Activated CD4-positive, alpha-beta memory T cell treated with anti-CD3 and anti-CD28 coated beads for 36 hours (primary cell): ENCODE measurements at regions of chr7 and their contacts with region 1.

Region 1: DNA sequence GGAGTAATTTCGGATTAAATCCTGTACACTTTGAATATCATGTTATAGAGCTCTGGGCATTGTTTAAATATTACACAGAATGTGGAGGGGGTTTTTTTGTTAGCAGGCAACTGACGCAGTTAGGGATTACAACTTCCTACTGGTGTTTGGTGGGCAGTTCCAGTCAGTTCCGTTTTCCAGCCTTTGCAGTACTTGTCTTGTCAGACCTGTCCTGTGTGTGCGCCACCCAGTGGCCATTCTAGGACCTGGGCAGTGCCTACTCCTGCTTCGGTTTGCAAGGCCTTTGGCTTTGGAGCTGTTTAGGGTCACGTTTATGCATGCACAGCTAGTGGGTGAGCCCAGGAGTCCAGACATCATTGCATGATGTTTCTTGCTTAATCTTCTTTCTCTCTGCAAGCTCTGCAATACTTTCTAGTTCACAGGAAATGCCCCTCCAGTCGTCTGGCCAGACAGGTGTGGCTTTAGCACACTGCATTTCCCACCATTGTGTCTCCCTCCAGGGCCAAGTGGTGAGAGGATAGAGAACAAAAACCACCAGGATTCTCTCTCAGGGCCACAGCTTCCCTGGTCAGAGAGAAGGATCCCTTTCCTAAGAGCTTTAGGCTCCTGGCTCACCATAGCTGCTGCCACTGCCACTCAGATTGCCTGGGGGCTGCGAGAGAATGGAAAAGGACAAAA is 96.5 kb upstream of the TARP start:
- DNase-seq: peak; percentile 84
- H3K4me3 Mint-ChIP-seq: no peak overlapping the region
- H3K27ac Mint-ChIP-seq: peak overlapping the region; percentile 29
- H3K4me1 Mint-ChIP-seq: peaks cover 56% of the 10 kb centered on the region
- H3K27me3 Mint-ChIP-seq: no peaks in the 10 kb centered on the region

Region 2: DNA sequence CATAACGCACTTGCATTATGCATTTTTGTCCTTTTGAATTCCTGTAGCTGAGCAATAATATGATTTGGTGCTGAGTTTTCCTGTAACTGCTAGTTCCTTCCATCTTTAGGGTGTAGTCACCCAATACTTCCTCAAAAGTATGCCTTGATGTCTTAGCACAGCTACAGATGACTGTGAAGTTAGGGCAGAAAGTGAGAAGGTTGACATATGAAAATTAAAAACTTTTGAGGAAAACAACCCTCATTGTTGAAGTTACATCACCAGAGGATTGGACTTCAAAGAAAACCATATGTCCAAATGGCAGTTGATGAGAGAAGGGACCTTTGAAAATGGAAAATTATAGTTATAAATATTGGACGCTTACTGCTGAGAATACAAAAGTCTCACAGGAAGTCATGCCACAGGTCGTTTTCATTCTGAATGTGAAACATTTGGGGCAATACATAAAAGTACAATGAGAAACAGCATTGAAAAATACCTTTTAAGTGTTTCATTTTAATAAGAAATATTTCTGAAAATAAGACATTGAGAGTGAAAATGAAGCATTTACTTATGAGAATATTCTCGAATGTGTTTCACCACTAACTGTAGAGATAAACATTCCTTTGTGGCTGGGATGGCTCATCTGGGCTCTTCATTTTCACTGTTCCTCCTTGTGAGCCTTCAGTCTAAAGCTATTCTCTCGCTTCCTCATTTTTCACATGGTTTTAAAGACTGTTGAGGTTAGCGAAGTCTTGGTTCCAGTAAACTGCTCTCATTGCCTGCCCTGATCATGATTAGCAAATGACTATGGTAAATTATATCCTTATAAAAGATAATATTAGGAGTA is 583.0 kb before region 1 on chr7:
- CTCF ChIA-PET with region 1: no interaction called
- POLR2A ChIA-PET with region 1: no interaction called
- intact Hi-C with region 1: loop called (anchors 10 kb)
- DNase-seq: no peak
- H3K4me3 Mint-ChIP-seq: no peak overlapping the region
- H3K27ac Mint-ChIP-seq: no peak overlapping the region
- H3K4me1 Mint-ChIP-seq: peaks cover 1% of the 10 kb centered on the region
- H3K27me3 Mint-ChIP-seq: peaks cover 7% of the 10 kb centered on the region

Region 3: GRCh38 chr7:38107486-38107893 is 262.5 kb before region 1 on chr7:
- CTCF ChIA-PET with region 1: interaction called, 78 read pairs
- POLR2A ChIA-PET with region 1: no interaction called
- intact Hi-C with region 1: loop called (anchors 1 kb)
- DNase-seq: peak; percentile 73
- H3K4me3 Mint-ChIP-seq: no peak overlapping the region
- H3K27ac Mint-ChIP-seq: no peak overlapping the region
- H3K4me1 Mint-ChIP-seq: no peaks in the 10 kb centered on the region
- H3K27me3 Mint-ChIP-seq: peaks cover 13% of the 10 kb centered on the region

Region 4: DNA sequence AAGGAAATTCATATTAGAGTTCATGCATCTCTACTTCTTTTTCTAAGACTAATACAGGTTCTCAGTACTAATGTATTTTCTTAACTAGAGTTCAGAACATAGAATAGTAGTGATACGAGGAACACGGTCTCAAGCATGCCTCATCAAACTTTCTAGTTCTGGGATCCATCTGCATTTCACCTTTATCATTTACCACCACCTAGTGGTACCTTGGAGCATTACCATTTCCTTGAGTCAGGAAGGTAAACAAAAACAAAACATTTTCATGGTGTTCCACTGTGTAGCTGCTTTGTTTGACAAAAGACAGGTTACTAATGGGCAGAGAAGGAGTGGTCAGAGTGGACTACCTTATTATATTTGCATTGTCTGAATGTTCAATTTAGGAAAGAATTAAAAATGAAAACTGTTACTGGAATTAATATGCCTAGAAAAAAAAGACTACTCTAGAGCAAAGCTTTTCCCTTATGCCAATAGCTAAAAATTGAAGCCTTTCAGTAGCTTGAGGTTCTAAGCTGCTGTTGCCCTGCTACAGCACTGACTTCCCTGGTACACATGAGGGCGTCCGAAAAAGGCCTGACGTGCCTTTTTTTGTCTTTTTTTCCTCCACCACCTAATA is 147.4 kb before region 1 on chr7:
- CTCF ChIA-PET with region 1: interaction called, 233 read pairs
- POLR2A ChIA-PET with region 1: no interaction called
- intact Hi-C with region 1: no loop called
- DNase-seq: no peak
- H3K4me3 Mint-ChIP-seq: no peak overlapping the region
- H3K27ac Mint-ChIP-seq: peak overlapping the region; percentile 31
- H3K4me1 Mint-ChIP-seq: peaks cover 29% of the 10 kb centered on the region
- H3K27me3 Mint-ChIP-seq: no peaks in the 10 kb centered on the region

Region 5: DNA sequence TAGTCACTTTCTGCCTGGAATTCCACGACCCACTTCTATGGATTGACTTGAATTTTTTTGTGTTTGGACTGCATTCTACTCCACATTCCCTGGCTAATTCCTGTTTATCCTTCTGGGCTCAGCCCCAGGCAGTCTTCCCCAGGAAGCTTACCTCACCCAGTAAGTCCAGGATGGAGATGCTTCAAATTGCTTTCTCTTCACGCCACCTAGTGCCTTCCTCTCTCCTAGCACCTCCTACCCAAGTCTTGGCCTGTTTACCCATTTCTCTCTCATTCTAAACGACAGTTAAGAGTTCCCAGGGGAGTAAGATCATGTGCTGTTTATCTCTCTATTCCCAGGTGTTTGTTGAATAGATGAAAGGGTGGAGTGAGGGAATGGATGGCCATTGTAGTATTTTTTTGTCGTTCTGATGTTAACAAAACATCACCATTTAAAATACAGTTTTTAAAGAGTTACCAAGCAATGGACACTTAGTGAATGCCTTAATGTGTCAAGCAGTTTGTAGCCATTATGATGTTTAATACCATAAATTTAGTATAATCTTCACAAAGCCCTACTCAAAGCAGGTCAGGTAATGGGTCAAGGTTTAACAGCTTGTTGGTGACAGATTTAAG is 51.0 kb before region 1 on chr7:
- CTCF ChIA-PET with region 1: interaction called, 13 read pairs
- POLR2A ChIA-PET with region 1: no interaction called
- intact Hi-C with region 1: no loop called
- DNase-seq: peak; percentile 30
- H3K4me3 Mint-ChIP-seq: peak overlapping the region; percentile 38
- H3K27ac Mint-ChIP-seq: peak overlapping the region; percentile 67
- H3K4me1 Mint-ChIP-seq: peaks cover 25% of the 10 kb centered on the region
- H3K27me3 Mint-ChIP-seq: no peaks in the 10 kb centered on the region

Region 6: DNA sequence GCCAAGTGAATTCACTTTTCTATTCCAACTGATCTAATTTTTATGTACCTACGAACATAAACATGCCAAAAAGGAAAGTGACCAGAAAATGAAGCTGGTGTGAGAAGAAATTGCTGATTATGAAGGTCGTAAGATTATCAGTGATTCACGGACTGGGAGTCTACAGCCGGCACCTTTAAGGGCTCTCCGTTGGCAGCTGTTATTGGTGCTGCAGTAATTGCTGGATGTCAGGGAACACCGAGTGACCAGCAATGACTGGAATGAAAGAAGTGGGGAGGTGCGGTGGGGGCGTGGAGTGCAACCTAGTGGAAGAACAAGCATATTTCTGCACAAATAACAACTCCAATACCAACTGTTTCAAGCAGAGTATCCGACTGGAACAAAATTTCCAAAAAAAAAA is 13.3 kb after region 1 on chr7:
- CTCF ChIA-PET with region 1: interaction called, 21 read pairs
- POLR2A ChIA-PET with region 1: no interaction called
- intact Hi-C with region 1: no loop called
- DNase-seq: no peak
- H3K4me3 Mint-ChIP-seq: no peak overlapping the region
- H3K27ac Mint-ChIP-seq: no peak overlapping the region
- H3K4me1 Mint-ChIP-seq: no peaks in the 10 kb centered on the region
- H3K27me3 Mint-ChIP-seq: no peaks in the 10 kb centered on the region